ENCODE measurements at regions of chr5 and their contacts with region 1.

Region 1: DNA sequence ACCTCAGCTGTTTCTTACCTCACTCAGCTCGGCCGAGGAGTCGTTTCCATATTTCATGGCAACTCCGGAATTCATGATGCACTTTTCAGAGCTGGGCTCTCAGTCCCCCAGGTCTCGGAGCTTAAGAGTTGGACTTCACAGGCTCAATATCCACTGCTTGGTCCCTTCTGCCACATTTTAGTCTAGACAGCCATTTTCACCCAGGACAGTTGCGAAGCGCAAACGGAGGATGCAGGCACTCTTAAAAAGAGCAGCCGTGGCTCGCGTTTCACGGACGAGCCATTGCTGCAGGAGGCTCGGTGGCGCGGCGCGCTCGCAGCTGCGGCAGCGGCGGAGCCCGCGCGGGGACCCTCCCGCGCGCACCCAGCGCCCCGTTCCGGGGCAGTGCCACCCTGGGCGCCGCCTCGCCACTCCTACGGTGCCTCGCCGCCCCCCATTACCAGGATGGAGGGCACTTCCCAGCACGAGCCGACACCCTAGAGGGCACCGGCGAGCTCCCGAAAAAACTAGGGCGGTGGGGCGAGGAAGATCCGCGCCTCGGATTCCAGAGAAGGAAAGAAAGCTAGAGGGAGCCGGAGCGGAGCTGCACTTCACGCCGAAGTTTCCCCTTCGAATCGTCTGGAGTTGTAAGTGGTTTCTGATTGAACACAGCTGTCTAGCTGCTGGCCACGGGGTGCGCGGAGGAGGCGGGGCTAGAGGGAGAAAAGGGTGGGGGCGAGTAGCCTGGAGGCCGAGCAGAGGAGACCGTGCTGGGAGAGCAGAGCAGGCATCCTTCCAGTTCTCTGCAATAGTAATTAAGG is 140.3 kb downstream of the TSSK1B start:
- DNase-seq: peak; percentile 94 to 95 (median 94)
- ATAC-seq: peak; percentile 96 to 98 (median 98)
- H3K4me3 ChIP-seq: peak overlapping the region; percentile 27 to 98 (median 76)
- H3K27ac ChIP-seq: peak overlapping the region; percentile 80 to 97 (median 90)
- H3K4me1 ChIP-seq: peaks cover 0 to 40% (median 25%) of the 10 kb centered on the region in 12 donors
- H3K27me3 ChIP-seq: peaks cover 0 to 19% (median 0%) of the 10 kb centered on the region in 9 donors
- CTCF ChIP-seq: peak in 5 of 12 donors; percentile 16 to 50 (median 38)
- POLR2A ChIP-seq: peak in 1 of 2 donors; percentile 94

Region 2: DNA sequence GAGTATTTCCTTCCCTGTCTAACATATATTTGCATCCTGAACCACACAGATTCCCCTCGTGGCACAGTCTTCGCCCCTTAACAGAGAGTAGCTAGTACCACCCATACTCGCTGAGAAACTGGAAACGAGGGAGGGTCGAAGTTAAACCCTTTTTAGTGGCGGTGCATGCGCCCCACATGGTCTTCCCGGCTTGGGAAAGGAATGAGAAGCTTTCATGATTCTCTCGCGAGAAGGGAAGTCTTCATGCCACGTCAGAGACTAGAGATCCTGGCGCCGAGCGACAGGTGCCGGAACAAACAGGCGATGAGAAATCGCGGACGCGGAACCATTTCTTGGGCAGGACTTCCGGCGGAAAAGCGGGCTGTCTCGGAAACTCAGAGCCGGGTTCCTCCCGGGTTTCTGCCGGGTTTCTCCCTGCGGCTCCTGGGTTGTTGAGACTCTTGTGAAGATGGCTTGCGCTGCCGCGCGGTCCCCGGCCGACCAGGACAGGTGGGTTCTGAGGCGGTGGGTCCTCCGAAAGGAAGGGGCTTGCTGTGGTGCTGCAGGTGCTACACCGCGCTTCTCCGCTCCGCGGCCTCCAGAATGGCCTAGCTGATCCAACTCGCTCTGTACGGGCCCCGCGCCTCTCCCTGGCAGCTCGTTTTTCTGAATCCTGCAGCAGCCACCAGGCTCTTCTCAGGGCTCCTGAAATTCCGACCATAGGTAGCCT is 433.4 kb before region 1 on chr5 and contains the start of gene SRP19:
- intact Hi-C with region 1: no loop called
- DNase-seq: peak; percentile 95 to 97 (median 96)
- ATAC-seq: peak; percentile 95 to 98 (median 96)
- H3K4me3 ChIP-seq: peak within 1 kb of the TSS; percentile 71 to 98 (median 84)
- H3K27ac ChIP-seq: peak within 1 kb of the TSS; percentile 63 to 89 (median 82)
- H3K4me1 ChIP-seq: peaks cover 0 to 35% (median 26%) of the 10 kb centered on the region in 12 donors
- H3K27me3 ChIP-seq: no peaks in the 10 kb centered on the region
- CTCF ChIP-seq: no peak
- POLR2A ChIP-seq: peak in 1 of 2 donors; percentile 78
- total RNA-seq, gene SRP19: 23.6 to 45.7 (median 28.2) TPM

Region 3: DNA sequence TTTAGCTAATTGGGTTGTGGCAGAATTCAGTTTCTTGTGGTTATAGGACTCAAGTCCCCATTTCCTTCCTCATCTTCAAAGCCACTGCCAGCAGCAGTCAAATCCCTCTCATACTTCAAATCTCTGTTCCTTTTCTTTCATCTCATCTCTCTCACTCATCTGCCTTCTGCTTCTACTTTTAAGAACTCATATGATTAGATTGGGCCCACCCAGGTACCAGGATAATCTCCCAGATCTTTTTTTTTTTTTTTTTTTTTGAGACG is 364.5 kb before region 1 on chr5:
- intact Hi-C with region 1: no loop called
- DNase-seq: no peak
- ATAC-seq: peak in 1 of 4 donors; percentile 16
- H3K4me3 ChIP-seq: no peak overlapping the region
- H3K27ac ChIP-seq: peak overlapping the region in 1 of 12 donors; percentile 39
- H3K4me1 ChIP-seq: peaks cover 0 to 39% (median 0%) of the 10 kb centered on the region in 12 donors
- H3K27me3 ChIP-seq: no peaks in the 10 kb centered on the region
- CTCF ChIP-seq: no peak
- POLR2A ChIP-seq: no peak

Region 4: DNA sequence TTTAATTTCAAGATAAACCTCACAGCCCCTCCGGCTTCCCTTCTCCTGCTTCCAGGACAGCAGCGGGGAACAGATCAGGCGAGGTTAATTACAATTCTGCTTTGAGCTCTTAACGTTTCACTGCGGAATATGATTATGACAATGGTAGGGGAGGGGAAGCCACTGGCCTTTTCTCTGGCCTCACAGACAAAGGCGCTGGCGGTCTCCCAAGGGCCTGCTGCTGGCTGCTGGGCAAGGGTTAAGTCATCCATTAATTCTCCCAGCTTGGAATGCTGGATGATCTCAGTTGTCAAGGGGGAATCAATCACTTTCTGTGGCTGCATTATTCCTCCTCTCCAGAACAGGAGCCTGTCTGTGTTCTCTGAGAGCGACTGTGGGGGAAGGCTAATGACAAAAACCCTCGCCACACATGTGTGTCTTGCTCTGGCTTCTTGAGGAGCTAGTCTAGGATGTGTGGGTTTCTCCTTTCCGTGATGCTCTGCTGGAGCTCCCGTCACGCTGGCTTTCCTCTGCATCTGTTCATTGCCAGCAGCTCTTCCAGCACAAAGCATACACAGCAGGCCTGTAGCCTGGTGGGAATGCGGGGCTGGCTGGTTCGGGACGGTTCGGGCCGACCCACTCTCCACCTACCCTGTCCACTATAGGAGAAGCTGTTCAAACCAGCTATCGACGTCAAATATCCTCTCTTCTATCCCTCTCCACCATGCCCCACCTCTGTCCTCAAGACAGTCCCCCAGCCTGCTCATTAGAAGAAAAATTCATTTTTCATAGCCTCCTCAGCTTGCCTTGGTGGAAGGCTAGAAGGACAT is 235.1 kb before region 1 on chr5:
- intact Hi-C with region 1: loop called in 1 of 10 experiments (anchors 5 kb)
- DNase-seq: peak in 3 of 5 donors; percentile 35 to 77 (median 62)
- ATAC-seq: peak in 2 of 4 donors; percentile 27 to 54
- H3K4me3 ChIP-seq: no peak overlapping the region
- H3K27ac ChIP-seq: peak overlapping the region in 3 of 12 donors; percentile 11 to 32 (median 22)
- H3K4me1 ChIP-seq: peaks cover 0 to 37% (median 11%) of the 10 kb centered on the region in 12 donors
- H3K27me3 ChIP-seq: no peaks in the 10 kb centered on the region
- CTCF ChIP-seq: no peak
- POLR2A ChIP-seq: no peak

Region 5: GRCh38 chr5:113090336-113091106 is 204.0 kb before region 1 on chr5:
- intact Hi-C with region 1: loop called in 3 of 10 experiments (anchors 5 to 10 kb)
- DNase-seq: peak in 1 of 5 donors; percentile 45
- ATAC-seq: peak in 3 of 4 donors; percentile 33 to 49 (median 35)
- H3K4me3 ChIP-seq: peak overlapping the region in 3 of 12 donors; percentile 4 to 14 (median 10)
- H3K27ac ChIP-seq: peak overlapping the region in 9 of 12 donors; percentile 0 to 68 (median 41)
- H3K4me1 ChIP-seq: peaks cover 3 to 79% (median 53%) of the 10 kb centered on the region in 12 donors
- H3K27me3 ChIP-seq: no peaks in the 10 kb centered on the region
- CTCF ChIP-seq: peak in 5 of 12 donors; percentile 11 to 29 (median 24)
- POLR2A ChIP-seq: no peak

Region 6: GRCh38 chr5:113132564-113132963 is 161.9 kb before region 1 on chr5:
- intact Hi-C with region 1: loop called in 2 of 10 experiments (anchors 10 kb)
- DNase-seq: no peak
- ATAC-seq: peak; percentile 72 to 78 (median 76)
- H3K4me3 ChIP-seq: no peak overlapping the region
- H3K27ac ChIP-seq: peak overlapping the region in 1 of 12 donors; percentile 12
- H3K4me1 ChIP-seq: peaks cover 0 to 33% (median 6%) of the 10 kb centered on the region in 12 donors
- H3K27me3 ChIP-seq: no peaks in the 10 kb centered on the region
- CTCF ChIP-seq: no peak
- POLR2A ChIP-seq: no peak

Region 7: GRCh38 chr5:113212244-113212920 is 82.1 kb before region 1 on chr5:
- intact Hi-C with region 1: loop called in 5 of 10 experiments (anchors 5 to 10 kb)
- DNase-seq: peak in 4 of 5 donors; percentile 43 to 72 (median 66)
- ATAC-seq: peak in 2 of 4 donors; percentile 30 to 67
- H3K4me3 ChIP-seq: no peak overlapping the region
- H3K27ac ChIP-seq: peak overlapping the region in 4 of 12 donors; percentile 5 to 47 (median 20)
- H3K4me1 ChIP-seq: peaks cover 5 to 77% (median 41%) of the 10 kb centered on the region in 12 donors
- H3K27me3 ChIP-seq: no peaks in the 10 kb centered on the region
- CTCF ChIP-seq: no peak
- POLR2A ChIP-seq: no peak

Region 8: DNA sequence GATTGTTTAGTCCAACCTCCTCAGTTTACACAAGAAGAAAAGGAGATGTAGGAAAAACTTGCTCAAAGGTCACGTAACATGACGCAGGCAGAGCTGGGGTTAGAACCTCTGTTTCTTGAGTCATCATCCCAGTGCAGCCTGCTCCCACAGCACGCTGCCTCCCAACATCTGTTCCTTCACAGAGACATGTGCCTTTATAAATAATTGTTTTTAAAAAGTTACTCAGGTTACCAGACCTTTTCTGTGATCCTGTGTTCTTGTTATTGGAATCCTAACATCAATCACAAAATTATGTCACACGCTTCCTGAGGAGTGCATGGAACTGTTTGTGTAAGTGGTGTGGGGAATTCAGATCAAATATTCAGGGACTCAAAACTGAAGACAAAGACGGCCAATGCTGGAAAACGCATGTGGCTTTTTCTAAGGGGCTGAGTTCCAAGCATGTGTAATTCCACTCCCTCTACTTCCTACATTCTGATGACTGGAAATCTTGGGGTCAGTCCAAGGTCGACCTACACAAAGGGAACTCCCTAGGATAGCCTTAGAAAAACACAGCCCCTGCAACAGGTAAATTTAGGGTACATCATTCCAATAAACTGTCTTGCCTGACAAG is 44.1 kb before region 1 on chr5:
- intact Hi-C with region 1: loop called in 6 of 10 experiments (anchors 5 to 10 kb)
- DNase-seq: peak in 4 of 5 donors; percentile 48 to 63 (median 56)
- ATAC-seq: peak; percentile 32 to 81 (median 74)
- H3K4me3 ChIP-seq: no peak overlapping the region
- H3K27ac ChIP-seq: peak overlapping the region; percentile 20 to 79 (median 56)
- H3K4me1 ChIP-seq: peaks cover 18 to 86% (median 50%) of the 10 kb centered on the region in 12 donors
- H3K27me3 ChIP-seq: no peaks in the 10 kb centered on the region
- CTCF ChIP-seq: no peak
- POLR2A ChIP-seq: no peak